ENCODE measurements at regions of chr13 and their contacts with region 1.

Region 1: DNA sequence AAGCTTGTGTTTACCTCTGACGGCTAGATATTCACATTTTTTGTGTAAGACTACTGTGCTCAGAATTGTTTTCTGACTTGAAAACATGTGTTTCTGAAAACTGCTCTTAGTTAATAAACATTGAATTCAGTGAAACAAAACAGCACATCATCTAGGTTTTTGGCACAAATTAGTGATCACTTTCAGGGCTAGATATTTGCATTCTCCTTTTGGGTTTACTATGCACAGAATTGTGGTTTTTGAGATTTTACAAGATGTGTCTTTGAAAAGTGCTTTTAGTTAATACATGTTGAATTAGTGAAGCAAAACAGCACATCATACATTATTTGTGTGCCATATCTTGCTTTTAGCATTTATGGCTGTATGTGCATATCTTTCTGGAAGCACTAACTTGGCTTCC is 8.2 kb upstream of the PARP4 start:
- DNase-seq: no peak
- H3K4me3 ChIP-seq: no peak overlapping the region
- H3K27ac ChIP-seq: no peak overlapping the region
- H3K4me1 ChIP-seq: no peaks in the 10 kb centered on the region
- H3K27me3 ChIP-seq: no peaks in the 10 kb centered on the region
- CTCF ChIP-seq: no peak
- EP300 ChIP-seq: no peak
- POLR2A ChIP-seq: no peak

Region 2: GRCh38 chr13:23384111-23384510 is 1136.6 kb before region 1 on chr13:
- intact Hi-C with region 1: no loop called
- DNase-seq: no peak
- H3K4me3 ChIP-seq: no peak overlapping the region
- H3K27ac ChIP-seq: no peak overlapping the region
- H3K4me1 ChIP-seq: no peaks in the 10 kb centered on the region
- H3K27me3 ChIP-seq: no peaks in the 10 kb centered on the region
- CTCF ChIP-seq: no peak
- EP300 ChIP-seq: no peak
- POLR2A ChIP-seq: no peak

Region 3: DNA sequence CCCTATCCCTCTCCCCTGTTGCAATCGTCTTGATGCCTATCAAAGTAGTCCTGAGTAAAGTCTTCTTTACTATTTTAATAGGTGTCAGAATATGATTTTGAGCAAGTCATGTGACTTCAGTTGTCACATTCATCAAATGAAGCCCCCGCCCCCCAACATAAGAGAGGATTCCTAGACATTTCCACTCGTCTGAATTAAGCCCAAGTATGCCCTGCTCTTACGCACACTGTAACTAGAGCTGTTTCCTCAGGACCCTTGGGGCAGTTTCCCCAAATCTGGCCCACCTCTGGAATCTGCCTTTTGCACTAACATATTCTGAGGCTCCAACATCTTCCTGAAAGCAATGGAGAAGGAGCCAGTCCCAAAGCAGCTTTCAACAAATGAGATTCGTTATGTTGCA is 1112.7 kb before region 1 on chr13:
- intact Hi-C with region 1: loop called in 1 of 4 experiments (anchors 5 kb)
- DNase-seq: no peak
- H3K4me3 ChIP-seq: no peak overlapping the region
- H3K27ac ChIP-seq: no peak overlapping the region
- H3K4me1 ChIP-seq: no peaks in the 10 kb centered on the region
- H3K27me3 ChIP-seq: no peaks in the 10 kb centered on the region
- CTCF ChIP-seq: no peak
- EP300 ChIP-seq: no peak
- POLR2A ChIP-seq: no peak

Measured in ovary (tissue), 10 donors.